ENCODE measurements at regions of chr12 and their contacts with region 1.

Region 1: DNA sequence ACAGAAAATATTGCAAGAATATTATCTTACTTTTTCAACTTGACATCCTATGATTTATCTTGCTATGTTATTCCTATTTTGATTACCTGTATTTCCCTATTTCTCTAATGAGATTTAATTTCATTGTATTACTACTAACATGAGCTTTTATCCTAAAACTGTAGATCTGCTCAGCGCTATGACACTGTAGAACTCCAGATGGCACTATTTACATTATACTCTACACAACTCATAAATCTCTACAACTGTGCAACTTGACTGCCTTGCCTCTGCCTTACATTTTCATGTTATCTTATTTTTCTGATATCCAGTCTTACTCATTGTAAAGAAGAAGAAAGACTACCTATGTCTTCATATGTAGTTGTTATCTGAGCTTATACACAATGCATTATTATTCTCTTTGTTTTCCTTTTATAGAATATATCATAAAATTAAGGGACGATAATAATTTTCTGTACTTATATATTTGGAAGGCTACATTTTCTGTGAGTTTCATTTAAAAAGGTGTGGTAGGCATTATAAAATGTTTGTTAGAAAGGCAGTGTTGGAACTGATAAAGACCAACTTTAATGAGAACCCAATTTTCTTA is 24.1 kb downstream of the NUP37 start:
- DNase-seq: no peak
- ATAC-seq: peak; percentile 64
- H3K4me3 Mint-ChIP-seq: no peak overlapping the region
- H3K27ac Mint-ChIP-seq: no peak overlapping the region
- H3K4me1 Mint-ChIP-seq: peaks cover 7% of the 10 kb centered on the region
- H3K27me3 Mint-ChIP-seq: no peaks in the 10 kb centered on the region

Region 2: DNA sequence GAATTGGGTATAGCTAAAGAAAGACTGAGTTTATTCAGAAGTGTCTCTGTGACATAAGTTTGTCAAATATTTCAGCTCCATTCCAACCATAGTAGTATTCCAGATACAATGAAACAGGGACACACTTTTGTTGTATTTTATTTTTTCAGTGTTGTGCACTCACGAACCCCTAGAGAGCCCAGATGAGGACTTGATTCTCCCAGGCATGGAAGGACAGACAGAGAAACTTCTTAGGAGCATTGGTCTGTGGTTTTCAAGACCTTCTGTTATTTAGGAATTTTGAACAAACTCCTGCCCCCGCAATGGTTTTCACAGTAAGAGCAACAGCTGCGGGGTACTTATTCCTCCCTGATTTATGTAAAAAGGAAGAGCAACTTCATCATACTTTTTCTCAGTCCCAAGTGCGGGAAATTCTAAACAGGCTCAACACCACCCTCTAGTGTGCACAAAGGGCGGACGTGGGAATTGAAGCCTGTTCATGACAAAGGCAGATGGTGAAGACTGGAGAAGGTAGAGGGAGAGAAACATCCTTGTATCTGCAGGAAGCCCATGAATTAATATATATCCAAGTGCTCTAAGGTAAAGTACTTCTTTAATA is 673.6 kb after region 1 on chr12:
- CTCF ChIA-PET with region 1: no interaction called
- POLR2A ChIA-PET with region 1: no interaction called
- intact Hi-C with region 1: loop called in 1 of 2 experiments (anchors 10 kb)
- DNase-seq: peak; percentile 57
- ATAC-seq: peak; percentile 60
- H3K4me3 Mint-ChIP-seq: no peak overlapping the region
- H3K27ac Mint-ChIP-seq: no peak overlapping the region
- H3K4me1 Mint-ChIP-seq: no peaks in the 10 kb centered on the region
- H3K27me3 Mint-ChIP-seq: peaks cover 3% of the 10 kb centered on the region